ENCODE measurements at regions of chr2 and their contacts with region 1.

Region 1: DNA sequence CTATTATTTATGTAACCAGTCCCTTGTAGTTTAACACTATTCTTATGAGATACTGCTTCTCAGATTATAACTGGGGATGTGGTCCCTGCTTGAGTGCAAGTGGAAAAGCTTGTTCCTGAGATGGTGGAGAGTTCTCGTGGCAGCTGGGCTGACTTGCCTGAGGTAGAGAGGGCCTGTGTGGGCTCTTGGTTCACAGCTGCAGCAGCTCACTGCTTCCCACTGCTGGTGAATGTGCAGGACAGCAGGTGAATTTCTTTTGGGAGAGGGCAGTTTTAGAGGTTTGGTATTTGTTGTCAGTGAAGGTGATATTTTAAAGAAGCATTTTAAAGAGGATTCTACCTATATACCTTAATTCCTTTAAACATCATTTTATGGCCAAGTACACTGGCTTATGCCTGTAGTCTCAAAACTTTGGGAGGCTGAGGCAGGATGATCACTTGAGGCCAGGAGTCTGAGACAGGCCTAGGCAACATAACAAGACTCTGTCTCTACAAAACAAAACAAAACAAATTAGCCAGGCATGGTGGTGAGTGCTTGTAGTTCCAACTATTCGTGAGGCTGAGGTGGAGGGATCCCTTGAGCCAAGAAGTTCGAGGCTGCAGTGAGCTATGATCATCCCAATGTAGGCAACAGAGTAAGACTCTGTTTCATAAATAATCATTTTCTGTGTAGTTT is 94.8 kb downstream of the MTA3 start:
- DNase-seq: peak; percentile 24 to 84 (median 60)
- ATAC-seq: peak; percentile 100
- H3K4me3 ChIP-seq: no peak overlapping the region
- H3K4me3 Mint-ChIP-seq: peak overlapping the region; percentile 32
- H3K27ac ChIP-seq: no peak overlapping the region
- H3K27ac Mint-ChIP-seq: peak overlapping the region; percentile 85
- H3K4me1 ChIP-seq: peaks cover 10% of the 10 kb centered on the region
- H3K4me1 Mint-ChIP-seq: peaks cover 25% of the 10 kb centered on the region
- H3K27me3 ChIP-seq: no peaks in the 10 kb centered on the region
- H3K27me3 Mint-ChIP-seq: no peaks in the 10 kb centered on the region
- CTCF ChIP-seq: peak; percentile 91

Region 2: DNA sequence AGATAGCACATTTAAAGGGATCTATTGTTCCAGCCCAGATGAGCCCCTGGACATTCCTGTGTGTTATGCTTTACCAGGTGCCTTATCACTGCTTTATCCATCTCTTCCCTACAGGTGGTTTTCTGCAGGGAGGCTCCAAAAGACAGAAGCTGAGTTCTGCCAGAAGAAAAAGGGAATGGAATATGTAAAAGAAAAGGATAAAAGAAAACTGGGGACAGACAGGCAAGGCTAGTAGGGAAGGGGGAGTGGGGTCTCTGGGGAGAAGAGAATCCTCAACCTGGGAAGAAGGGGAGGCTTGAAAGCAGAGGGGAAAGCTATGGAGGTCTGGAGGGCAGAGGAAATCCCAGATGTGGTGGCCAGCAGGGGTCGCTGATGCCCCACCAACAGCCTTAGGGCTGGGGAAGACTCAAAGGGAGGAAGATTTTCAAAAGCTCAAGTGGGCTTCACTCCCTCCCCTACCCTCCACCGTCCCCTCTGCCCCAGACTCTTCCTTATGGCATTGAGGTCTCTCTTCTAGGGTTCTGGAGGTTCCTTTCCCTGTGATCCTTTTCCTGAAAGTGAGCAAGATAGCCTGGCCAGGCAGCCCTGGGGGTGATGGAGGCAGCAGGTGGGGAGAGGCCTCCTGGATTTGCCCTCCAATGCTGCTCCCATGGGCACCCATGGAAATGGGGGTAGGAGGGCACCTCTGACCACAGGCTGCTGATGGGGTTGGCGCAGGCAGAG is 793.5 kb before region 1 on chr2:
- CTCF ChIA-PET with region 1: interaction called, 6 read pairs
- POLR2A ChIA-PET with region 1: no interaction called
- intact Hi-C with region 1: loop called in 1 of 2 experiments (anchors 1 kb)
- DNase-seq: peak; percentile 44 to 83 (median 75)
- ATAC-seq: peak; percentile 83
- H3K4me3 ChIP-seq: no peak overlapping the region
- H3K4me3 Mint-ChIP-seq: no peak overlapping the region
- H3K27ac ChIP-seq: no peak overlapping the region
- H3K27ac Mint-ChIP-seq: no peak overlapping the region
- H3K4me1 ChIP-seq: no peaks in the 10 kb centered on the region
- H3K4me1 Mint-ChIP-seq: peaks cover 19% of the 10 kb centered on the region
- H3K27me3 ChIP-seq: no peaks in the 10 kb centered on the region
- H3K27me3 Mint-ChIP-seq: peaks cover 5% of the 10 kb centered on the region
- CTCF ChIP-seq: peak; percentile 76

Region 3: GRCh38 chr2:42438685-42439084 is 224.6 kb before region 1 on chr2:
- CTCF ChIA-PET with region 1: no interaction called
- POLR2A ChIA-PET with region 1: no interaction called
- intact Hi-C with region 1: no loop called
- DNase-seq: no peak
- ATAC-seq: no peak
- H3K4me3 ChIP-seq: no peak overlapping the region
- H3K4me3 Mint-ChIP-seq: no peak overlapping the region
- H3K27ac ChIP-seq: no peak overlapping the region
- H3K27ac Mint-ChIP-seq: no peak overlapping the region
- H3K4me1 ChIP-seq: no peaks in the 10 kb centered on the region
- H3K4me1 Mint-ChIP-seq: no peaks in the 10 kb centered on the region
- H3K27me3 ChIP-seq: peaks cover 0 to 2% of the 10 kb centered on the region in 2 experiments
- H3K27me3 Mint-ChIP-seq: no peaks in the 10 kb centered on the region
- CTCF ChIP-seq: no peak

Region 4: DNA sequence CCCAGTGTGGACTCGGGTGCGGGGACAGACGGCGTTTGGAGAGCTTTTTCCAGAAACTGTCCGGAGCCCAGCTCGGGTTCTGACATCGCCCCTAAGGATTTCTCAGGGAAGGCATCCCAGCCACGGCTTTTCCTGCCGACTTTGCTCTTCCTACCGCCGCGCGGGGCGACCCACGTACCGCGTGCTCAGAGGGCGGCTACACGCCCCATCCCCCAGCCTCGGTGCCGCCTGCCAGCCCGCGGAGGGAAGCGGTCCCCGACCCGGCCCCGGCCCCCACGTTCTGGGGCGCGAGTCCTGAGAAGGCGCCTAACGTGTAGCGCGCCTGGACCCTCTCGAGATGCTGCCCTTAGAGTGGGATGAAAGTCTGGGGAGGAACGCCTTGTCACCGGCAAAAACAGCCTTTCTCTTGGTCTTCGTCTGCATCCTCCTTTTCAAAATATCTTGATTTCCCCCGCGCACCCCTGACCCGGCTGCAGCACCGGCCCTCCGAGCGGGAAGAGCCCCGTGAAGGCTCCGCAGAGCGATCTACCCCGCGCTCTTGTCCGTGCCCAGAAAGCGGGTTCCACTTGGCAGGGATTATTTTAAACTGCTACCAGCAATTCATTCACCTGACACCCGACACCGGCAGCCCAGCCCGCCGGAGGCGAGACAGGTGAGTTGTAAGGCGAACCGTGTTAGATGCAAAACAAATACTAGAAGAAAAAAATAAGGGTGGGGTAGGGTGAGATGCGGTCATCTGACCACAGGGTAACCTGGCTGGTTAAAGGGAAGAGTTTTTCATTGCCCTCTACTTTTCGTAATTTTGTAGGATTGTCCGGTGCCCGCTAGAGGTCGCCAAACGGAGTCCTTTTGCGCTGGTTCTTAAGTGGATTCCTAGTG is 168.6 kb before region 1 on chr2:
- CTCF ChIA-PET with region 1: interaction called, 83 read pairs
- POLR2A ChIA-PET with region 1: interaction called, 6 read pairs
- intact Hi-C with region 1: loop called (anchors 1 kb)
- DNase-seq: peak; percentile 51 to 84 (median 75)
- ATAC-seq: peak; percentile 43
- H3K4me3 ChIP-seq: peak overlapping the region; percentile 58 to 74
- H3K4me3 Mint-ChIP-seq: peak overlapping the region; percentile 93
- H3K27ac ChIP-seq: peak overlapping the region in 1 of 2 experiments; percentile 15
- H3K27ac Mint-ChIP-seq: peak overlapping the region; percentile 89
- H3K4me1 ChIP-seq: no peaks in the 10 kb centered on the region
- H3K4me1 Mint-ChIP-seq: peaks cover 32% of the 10 kb centered on the region
- H3K27me3 ChIP-seq: peaks cover 0 to 4% of the 10 kb centered on the region in 2 experiments
- H3K27me3 Mint-ChIP-seq: peaks cover 9% of the 10 kb centered on the region
- CTCF ChIP-seq: peak; percentile 92

Region 5: GRCh38 chr2:42513257-42513918 is 149.9 kb before region 1 on chr2:
- CTCF ChIA-PET with region 1: interaction called, 15 read pairs
- POLR2A ChIA-PET with region 1: no interaction called
- intact Hi-C with region 1: loop called (anchors 1 kb)
- DNase-seq: peak in 3 of 9 experiments; percentile 12 to 48 (median 26)
- ATAC-seq: peak; percentile 44
- H3K4me3 ChIP-seq: no peak overlapping the region
- H3K4me3 Mint-ChIP-seq: no peak overlapping the region
- H3K27ac ChIP-seq: no peak overlapping the region
- H3K27ac Mint-ChIP-seq: no peak overlapping the region
- H3K4me1 ChIP-seq: peaks cover 7% of the 10 kb centered on the region
- H3K4me1 Mint-ChIP-seq: peaks cover 8% of the 10 kb centered on the region
- H3K27me3 ChIP-seq: no peaks in the 10 kb centered on the region
- H3K27me3 Mint-ChIP-seq: no peaks in the 10 kb centered on the region
- CTCF ChIP-seq: peak; percentile 63

Region 6: DNA sequence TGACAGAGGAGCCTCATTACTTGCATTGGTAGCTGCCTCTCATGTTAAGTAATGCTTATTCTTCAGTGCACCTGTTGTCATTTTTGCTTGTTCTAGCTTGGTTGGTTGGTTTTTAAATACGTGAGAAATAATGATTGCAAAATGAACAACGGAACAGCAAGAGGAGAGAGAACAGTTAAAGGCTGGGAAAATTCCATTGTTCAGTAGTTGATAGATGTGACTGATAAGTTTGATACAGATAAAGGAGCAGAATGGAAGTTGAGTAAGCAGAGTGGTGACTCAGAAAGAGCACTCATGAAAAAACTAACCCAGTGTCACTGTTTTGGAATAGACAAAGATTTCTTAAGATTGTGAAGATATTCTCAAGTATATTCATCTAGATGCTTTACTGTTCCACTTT is 44.3 kb before region 1 on chr2:
- CTCF ChIA-PET with region 1: interaction called, 9 read pairs
- POLR2A ChIA-PET with region 1: no interaction called
- intact Hi-C with region 1: loop called (anchors 5 kb)
- DNase-seq: no peak
- ATAC-seq: no peak
- H3K4me3 ChIP-seq: no peak overlapping the region
- H3K4me3 Mint-ChIP-seq: no peak overlapping the region
- H3K27ac ChIP-seq: no peak overlapping the region
- H3K27ac Mint-ChIP-seq: peak overlapping the region; percentile 70
- H3K4me1 ChIP-seq: no peaks in the 10 kb centered on the region
- H3K4me1 Mint-ChIP-seq: peaks cover 4% of the 10 kb centered on the region
- H3K27me3 ChIP-seq: no peaks in the 10 kb centered on the region
- H3K27me3 Mint-ChIP-seq: no peaks in the 10 kb centered on the region
- CTCF ChIP-seq: no peak

Measured in CD8-positive, alpha-beta T cell (primary cell).